Ascending aorta (tissue), 2 donors: ENCODE measurements at regions of chr6 and their contacts with region 1.

Region 1: DNA sequence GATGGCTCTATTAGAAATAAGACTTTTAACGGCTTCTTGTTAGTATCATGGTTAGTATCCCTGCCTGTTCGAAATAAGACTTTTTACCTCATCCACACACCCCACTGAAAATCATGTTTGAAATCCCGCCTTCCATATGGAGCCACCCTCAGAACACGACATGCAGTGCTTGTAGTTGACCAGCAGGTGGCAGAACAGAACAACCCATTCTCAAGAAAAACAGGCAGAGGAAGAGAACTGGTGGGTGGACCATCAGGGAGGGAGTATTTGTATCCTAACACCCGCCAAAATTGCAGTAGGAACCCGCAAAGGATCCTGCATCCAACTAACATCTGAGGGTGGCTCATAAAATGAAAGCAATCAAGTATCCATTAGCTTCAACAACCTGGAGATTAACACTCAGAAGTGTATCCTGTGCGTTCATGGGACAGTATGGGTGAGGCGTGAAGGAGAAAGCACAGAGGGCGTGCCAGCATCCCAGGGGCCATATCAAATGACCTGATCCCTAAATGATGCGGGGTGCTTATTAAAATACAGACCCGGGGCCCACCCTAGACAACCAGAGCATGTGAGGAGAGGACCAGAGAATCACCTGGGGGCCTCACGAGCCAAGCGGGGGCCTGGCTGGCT is 89.6 kb upstream of the NHSL1 start:
- DNase-seq: peak in 1 of 2 donors; percentile 73
- H3K4me3 ChIP-seq: no peak overlapping the region
- H3K27ac ChIP-seq: no peak overlapping the region
- H3K4me1 ChIP-seq: peaks cover 0 to 2% of the 10 kb centered on the region in 2 donors
- H3K27me3 ChIP-seq: no peaks in the 10 kb centered on the region
- CTCF ChIP-seq: peak; percentile 62 to 91 (median 85)

Region 2: DNA sequence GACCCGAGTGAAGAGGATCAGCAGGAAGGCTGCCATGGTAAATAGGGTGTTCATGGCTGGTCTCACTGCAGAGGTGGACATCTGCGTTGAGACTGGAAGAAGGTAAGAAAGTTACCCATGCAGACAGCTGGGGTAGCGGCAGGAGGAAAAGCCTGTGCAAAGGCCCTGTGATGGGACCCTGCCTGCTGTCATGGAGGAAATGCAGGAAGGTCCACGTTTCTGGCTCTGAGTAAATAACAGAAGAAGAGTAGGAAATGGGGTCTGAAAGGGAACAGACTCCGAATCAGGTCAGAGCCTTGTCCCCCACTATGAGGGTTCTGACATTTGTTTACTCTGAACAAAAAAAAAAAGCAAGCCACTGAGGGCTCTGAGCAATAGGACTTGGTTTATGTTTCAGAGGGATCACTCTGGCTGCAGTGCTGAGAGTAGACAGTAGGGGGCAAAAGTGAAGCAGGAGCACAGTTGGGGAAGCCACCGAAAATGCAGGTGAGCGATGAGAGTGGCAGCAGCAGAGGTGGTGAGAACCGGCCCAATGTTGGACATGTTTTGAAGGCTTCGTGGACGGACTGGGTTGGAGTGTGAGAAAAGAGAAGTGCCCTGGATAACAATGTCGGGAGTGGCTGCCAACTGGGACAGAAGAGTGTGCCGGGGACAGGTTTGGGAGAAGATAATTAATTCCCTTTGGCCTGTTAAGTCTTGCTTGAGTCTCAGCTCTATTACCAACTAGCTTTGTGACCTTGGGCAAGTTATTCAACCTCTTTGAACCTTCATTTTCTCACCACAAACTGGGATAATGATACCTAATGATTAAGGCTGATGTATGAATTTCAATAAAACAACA is 1980.8 kb before region 1 on chr6:
- intact Hi-C with region 1: no loop called
- DNase-seq: peak in 1 of 2 donors; percentile 84
- H3K4me3 ChIP-seq: no peak overlapping the region
- H3K27ac ChIP-seq: peak overlapping the region; percentile 79 to 87
- H3K4me1 ChIP-seq: peaks cover 8 to 20% of the 10 kb centered on the region in 2 donors
- H3K27me3 ChIP-seq: no peaks in the 10 kb centered on the region
- CTCF ChIP-seq: peak; percentile 60 to 76 (median 68)

Region 3: DNA sequence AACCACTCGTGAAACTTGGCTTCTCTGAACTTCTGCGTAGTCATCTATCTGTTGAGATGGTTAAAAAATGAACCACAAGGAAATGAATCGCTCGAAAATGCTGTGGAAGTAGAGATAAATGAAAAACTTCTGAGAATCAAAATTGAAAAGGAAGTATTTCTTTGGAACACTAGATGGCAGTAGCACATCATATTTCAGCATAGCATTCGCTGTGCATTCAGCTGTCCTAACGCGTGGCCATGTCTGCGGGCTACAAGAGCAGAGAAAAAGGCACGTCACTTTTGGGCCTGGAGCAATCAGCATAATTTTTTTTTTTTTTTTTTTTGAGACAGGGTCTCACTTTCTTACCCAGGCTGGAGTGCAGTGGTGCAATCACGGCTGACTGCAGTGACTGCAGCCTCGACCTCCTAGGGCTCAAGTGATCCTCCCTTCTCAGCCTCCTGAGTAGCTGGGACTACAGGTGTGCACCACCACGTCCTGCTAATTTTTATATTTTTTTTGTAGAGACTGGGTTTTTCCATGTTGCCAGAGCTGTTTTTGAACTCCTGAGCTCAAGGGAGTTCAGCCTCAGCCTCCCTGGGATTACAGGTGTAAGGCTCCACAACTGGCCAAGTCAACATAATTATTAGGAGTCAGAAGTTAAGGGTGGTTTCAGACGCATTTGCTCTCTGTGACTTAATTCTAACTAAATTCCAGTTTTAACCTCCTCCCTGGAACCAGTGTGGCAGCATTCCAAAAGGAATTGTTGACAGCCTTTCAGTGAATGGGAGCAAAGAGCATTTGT is 472.9 kb before region 1 on chr6:
- intact Hi-C with region 1: loop called (anchors 5 kb)
- DNase-seq: no peak
- H3K4me3 ChIP-seq: no peak overlapping the region
- H3K27ac ChIP-seq: no peak overlapping the region
- H3K4me1 ChIP-seq: no peaks in the 10 kb centered on the region
- H3K27me3 ChIP-seq: no peaks in the 10 kb centered on the region
- CTCF ChIP-seq: peak; percentile 50 to 75 (median 70)

Region 4: DNA sequence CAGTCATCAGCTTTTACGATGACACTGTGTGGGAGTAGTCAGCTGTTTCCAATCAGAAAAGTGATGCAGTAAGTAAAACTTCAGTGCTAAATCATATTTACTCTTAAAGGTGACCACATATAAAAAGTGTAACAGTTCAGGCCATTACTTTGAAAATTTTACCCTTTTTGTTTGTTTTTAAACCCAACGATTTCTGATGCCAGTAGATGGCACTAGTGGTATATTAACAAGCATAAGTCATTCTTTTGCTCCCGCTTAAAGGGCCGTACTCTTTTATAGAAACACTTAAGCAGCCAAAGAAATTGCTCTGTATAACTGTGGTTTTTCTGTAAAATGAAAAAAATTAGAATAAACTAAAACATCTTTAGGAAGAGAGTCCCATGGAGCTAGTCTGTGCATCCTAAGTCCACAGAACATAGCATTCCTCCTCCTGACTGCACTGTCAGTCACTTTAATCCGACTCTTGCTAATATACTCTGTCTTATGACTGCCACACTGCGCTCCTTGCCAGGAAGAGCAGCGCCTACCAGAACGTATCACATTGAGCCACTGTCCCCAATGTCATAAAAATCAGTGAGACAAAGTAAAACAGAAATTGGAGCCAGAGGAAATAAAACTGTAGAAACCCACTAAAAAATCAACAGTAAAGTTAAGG is 159.8 kb before region 1 on chr6:
- intact Hi-C with region 1: loop called (anchors 1 kb)
- DNase-seq: no peak
- H3K4me3 ChIP-seq: no peak overlapping the region
- H3K27ac ChIP-seq: no peak overlapping the region
- H3K4me1 ChIP-seq: no peaks in the 10 kb centered on the region
- H3K27me3 ChIP-seq: no peaks in the 10 kb centered on the region
- CTCF ChIP-seq: peak; percentile 32 to 62 (median 51)

Region 5: DNA sequence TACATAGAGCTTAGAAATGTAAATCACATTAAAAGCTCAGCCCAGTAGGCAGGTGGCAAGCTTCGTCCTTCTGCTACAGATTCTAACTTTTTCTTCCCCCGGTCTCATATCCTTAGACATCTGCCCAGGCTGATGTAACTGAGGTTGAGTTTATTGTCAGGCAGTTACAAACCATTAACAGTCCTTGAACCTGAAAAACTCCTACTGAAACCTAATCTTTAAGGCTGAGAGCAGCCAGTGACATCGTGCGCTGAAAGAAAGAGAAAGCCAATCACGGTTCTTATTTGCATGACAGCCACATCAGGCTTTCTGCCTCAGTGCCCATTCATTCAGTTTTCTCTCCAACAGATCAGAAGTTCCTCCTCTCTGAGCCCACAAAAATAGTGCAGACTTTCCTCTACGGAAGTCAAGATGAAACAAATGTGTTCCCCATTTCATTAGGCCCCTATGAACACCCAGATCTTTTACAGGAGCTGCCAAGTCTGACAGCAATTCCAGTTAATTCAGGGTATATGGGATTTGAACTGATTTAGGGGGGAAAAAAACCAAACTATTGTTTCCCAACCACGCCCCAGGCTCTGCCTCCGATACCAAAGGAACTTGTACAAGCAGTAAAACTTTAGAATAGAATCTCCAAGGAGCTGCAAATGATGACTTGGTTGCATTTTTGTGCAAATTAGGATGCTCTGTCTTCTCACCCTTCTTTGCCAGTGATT is 89.5 kb before region 1 on chr6 and contains the start of gene NHSL1:
- intact Hi-C with region 1: no loop called
- DNase-seq: no peak
- H3K4me3 ChIP-seq: no peak within 1 kb of the TSS
- H3K27ac ChIP-seq: no peak within 1 kb of the TSS
- H3K4me1 ChIP-seq: no peaks in the 10 kb centered on the region
- H3K27me3 ChIP-seq: no peaks in the 10 kb centered on the region
- CTCF ChIP-seq: no peak
- total RNA-seq, gene NHSL1: 10.4 TPM

Region 6: GRCh38 chr6:138538390-138539031 is 50.4 kb before region 1 on chr6:
- intact Hi-C with region 1: no loop called
- DNase-seq: no peak
- H3K4me3 ChIP-seq: no peak overlapping the region
- H3K27ac ChIP-seq: no peak overlapping the region
- H3K4me1 ChIP-seq: no peaks in the 10 kb centered on the region
- H3K27me3 ChIP-seq: no peaks in the 10 kb centered on the region
- CTCF ChIP-seq: no peak

Region 7: DNA sequence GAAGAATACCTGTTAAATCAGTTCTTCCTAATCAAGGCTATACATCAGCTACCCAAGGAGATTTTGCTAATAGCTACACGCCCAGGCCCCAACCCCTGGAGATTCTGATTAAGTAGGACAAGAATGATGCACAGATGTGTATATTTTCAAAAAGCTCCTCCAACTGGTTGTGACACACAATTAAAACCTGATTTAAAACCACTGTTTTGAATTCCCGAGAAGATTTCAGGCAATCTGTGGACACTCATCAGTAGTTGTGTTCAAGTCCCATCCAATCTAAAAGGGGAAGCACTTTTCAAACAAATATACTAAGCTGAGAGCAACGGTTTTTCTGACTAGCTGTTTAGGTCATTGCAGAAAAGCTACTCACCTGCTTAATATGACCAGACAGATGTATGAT is 29.2 kb after region 1 on chr6:
- intact Hi-C with region 1: no loop called
- DNase-seq: no peak
- H3K4me3 ChIP-seq: no peak overlapping the region
- H3K27ac ChIP-seq: no peak overlapping the region
- H3K4me1 ChIP-seq: no peaks in the 10 kb centered on the region
- H3K27me3 ChIP-seq: no peaks in the 10 kb centered on the region
- CTCF ChIP-seq: no peak

Region 8: DNA sequence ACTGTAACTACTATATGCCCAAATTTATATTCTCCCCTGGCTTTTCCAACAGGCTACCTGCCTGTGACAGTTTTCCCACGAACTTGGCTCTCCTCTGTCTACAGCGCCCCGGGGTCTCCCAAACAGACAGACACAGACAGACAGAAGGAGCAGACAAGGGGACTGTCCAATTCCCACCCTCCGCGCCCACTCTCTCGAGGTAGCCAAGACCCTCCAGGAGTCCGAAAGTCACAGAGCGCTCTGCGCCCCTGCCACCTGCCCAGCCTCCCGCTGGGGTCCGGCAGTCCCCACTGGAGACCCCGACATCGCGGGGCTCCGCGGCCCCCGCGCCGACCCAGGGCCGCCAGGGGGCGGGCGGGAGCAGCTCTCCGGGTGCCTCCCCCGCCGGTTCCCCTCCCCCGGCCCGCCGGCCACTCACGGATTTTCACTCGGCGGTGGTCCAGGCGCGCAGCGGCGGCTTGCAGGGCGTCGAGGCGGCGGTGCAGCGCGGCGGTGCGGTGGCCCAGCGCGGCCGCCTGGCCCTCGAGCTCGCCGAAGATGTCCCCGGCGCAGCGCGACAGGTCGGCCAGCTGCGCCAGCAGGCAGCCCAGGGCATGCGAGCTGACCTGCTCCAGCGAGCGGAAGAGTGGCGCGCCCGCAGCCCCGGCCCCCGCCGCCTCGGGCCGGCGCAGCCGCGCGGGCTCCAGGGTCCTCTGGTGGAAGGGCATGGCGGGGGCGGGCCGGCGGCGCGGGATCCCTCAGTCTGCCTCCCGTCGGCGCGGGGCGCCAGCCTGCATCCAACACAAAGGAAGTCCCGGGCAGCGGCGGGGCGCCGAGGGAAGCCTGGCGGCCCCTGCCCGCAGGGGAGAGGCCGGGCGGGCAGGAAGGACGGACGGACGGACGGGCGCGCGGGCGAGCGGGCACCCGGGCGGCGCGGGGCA is 103.4 kb after region 1 on chr6:
- intact Hi-C with region 1: loop called (anchors 5 kb)
- DNase-seq: peak in 1 of 2 donors; percentile 82
- H3K4me3 ChIP-seq: peak overlapping the region; percentile 90 to 98
- H3K27ac ChIP-seq: peak overlapping the region in 1 of 2 donors; percentile 66
- H3K4me1 ChIP-seq: peaks cover 0 to 3% of the 10 kb centered on the region in 2 donors
- H3K27me3 ChIP-seq: no peaks in the 10 kb centered on the region
- CTCF ChIP-seq: peak; percentile 62 to 78 (median 67)

Region 9: DNA sequence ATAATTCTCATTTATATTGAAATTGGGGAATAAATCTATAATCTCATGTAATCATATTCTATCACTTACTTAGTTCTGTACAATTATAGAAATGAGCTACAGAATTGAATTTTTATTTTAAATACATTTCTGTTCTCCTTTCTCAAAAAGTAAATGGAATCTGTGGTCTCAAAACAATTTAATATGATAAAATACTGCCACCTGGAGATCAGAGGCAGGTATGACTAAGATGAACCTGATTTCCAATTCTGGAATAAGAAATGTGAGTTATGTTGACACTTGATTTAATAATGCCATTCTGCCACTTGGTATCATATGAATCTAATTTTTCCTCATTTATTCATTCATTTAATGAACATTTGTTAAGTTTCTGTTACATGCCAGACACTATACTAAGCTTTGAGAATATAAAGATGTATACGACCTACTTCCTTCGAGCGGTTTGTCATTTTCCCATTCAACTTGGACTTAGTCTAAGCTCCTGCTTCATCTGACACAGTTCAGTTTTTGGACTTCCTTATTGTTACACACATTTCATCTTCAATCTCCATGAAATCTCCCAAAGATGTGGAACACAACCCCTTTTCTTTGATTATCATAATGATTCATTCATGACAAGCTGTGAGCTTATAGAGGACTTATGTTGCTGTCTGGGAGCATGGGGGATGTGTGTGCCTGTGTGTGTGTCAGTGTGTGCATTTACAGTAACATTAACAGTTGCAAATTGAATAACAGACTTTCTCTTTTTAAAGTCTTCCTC is 177.2 kb after region 1 on chr6:
- intact Hi-C with region 1: loop called (anchors 1 kb)
- DNase-seq: no peak
- H3K4me3 ChIP-seq: no peak overlapping the region
- H3K27ac ChIP-seq: no peak overlapping the region
- H3K4me1 ChIP-seq: no peaks in the 10 kb centered on the region
- H3K27me3 ChIP-seq: no peaks in the 10 kb centered on the region
- CTCF ChIP-seq: peak; percentile 48 to 61 (median 49)